ENCODE measurements at regions of chr2 and their contacts with region 1.

Region 1: GRCh38 chr2:20097879-20098714 is 46.7 kb upstream of the LAPTM4A start:
- DNase-seq: peak; percentile 94

Region 2: DNA sequence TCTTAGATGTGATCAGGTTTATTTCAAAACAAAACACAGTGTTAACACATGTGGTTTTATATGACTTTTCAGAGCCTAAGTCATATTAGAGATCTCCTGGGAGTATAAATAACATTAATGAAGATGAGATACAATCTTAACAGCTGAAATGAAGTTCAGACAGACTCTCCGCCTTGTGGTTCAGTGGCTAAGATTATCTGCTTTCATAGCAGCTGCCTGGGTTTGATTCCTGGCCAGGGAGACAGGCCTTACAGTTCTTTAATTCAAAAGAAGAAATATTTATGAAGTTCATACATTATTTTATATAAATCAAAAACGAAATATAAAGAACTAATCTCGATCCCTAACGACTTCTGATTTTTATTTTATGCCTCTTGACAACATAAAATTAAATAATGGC is 161.1 kb before region 1 on chr2:
- intact Hi-C with region 1: no loop called
- DNase-seq: no peak

Region 3: DNA sequence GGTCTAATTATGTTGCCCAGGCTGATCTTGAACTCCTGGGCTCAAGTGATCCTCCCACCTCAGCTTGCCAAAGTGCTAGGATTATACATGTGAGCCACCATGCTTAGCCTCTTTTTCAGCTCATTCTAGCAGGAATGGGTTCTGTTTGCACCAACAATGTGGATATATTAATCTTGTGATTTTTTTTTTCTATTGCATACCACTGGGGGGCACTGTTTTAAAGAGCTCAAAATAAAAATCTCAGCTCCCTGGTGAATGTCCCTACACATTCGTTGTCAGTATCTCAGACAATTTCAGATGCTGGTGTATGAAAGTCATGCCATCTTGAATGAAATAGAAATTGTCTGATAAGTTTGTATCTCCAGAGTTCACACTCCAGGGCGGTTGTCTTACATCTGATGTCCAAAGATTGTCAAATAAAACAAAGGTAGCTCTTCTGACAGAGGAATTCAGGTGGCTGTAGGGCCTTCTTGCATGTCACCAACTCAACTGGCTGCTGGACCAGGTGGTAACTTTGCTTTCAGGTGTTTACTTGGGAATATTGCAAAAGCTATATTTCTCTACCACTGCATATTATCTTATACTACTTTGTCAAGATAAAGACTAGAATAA is 82.5 kb before region 1 on chr2:
- intact Hi-C with region 1: loop called (anchors 2 to 5 kb)
- DNase-seq: no peak

Region 4: DNA sequence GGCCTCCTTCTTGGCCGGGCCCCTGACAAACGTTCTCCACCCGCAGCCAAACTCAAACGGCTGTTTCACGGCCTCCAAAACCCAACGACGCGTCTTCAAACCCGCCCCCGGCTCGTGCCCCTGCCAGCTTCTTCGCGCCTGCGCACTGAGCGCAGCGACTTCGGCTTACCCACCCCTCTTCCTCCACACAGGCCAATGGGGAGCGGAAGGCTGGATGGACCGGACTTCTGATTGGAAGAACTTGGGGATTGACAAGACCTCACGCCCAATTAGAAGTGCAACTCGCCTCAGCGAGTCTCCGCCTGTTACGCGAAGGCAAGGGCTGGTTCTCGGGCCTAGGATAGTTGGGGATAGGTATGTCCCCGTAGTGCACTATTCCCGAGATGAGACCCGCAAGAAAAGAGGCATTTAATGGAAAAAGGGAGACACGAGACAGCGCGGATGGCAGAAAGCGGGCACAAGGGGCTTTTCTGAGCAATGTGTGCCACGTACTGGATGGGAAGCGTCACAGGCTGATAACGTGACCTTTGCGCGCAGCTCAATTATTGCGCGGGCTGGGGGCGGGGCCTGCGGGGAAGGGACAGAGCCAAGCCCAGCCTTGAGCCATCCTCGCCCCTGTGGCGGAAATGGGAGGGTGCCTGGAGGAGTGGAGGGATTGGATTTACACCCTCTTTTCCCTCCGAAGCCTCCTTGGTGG is 46.4 kb before region 1 on chr2 and contains the start of gene LAPTM4A:
- intact Hi-C with region 1: loop called in 1 of 2 experiments (anchors 5 kb)
- DNase-seq: peak; percentile 99
- total RNA-seq, gene LAPTM4A: 199 to 230 TPM

Region 5: GRCh38 chr2:20391951-20392699 is 294.0 kb after region 1 on chr2:
- intact Hi-C with region 1: no loop called
- DNase-seq: no peak

Region 6: DNA sequence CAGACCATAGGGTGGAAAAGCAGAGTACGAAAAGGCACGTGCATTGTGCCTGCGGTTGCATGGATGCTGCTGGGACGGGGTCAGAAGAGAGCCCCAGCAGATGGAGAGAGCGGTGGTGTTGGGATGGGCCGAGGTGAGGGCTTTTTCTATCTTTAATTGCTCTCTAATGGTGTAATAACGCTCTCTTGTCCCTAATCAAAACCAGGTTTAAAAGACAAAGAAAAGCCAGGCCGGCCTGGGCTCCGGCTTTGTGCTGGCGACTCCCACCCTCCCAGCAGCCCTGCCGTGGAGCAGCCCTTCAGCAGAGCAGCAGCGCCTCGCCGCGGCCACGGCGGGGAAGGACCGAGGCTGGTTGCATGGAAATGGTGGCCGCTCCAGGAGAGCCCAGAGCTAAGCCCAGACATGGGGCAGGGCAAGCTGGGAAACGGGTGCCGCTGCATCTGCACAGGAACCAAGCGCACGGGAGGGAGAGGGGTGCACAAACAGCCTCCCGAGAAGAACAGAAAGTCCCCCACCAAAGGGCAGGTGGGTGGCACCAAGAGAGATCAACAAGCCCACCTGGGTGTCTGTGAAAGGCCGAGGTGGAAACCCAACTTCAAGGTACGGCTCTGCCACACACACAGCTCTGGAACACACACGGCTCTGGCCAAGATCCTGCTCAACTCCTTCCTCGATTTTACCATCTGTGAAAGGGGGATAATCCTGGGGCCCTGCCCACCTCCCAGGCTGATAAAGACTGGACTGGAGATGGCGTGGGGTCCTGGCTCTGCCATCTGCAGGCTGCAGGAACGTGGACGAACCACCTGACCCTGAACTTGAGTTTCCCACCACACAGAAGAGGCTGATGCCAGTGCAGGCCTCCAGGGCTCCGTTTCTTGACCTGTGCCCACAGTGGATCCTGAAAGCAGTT is 537.8 kb after region 1 on chr2:
- intact Hi-C with region 1: no loop called
- DNase-seq: peak; percentile 95